ENCODE measurements at regions of chr19 and their contacts with region 1.

Region 1: GRCh38 chr19:17282488-17283255 is 971 bp downstream of the ANKLE1 start:
- DNase-seq: peak; percentile 93

Region 2: GRCh38 chr19:17069218-17069617 is 213.5 kb before region 1 on chr19:
- intact Hi-C with region 1: loop called (anchors 2 kb)
- DNase-seq: no peak

Region 3: GRCh38 chr19:17205237-17206140 is 77.2 kb before region 1 on chr19:
- intact Hi-C with region 1: loop called (anchors 1 kb)
- DNase-seq: no peak

Region 4: GRCh38 chr19:17246681-17247425 is 35.8 kb before region 1 on chr19:
- intact Hi-C with region 1: no loop called
- DNase-seq: no peak

Region 5: GRCh38 chr19:17325897-17326598 is 43.4 kb after region 1 on chr19:
- intact Hi-C with region 1: no loop called
- DNase-seq: no peak